Heart left ventricle (tissue), 16 donors: ENCODE measurements at regions of chr22 and their contacts with region 1.

Region 1: GRCh38 chr22:19693981-19694670 is 20.2 kb upstream of the SEPTIN5 start:
- DNase-seq: peak in 1 of 5 donors; percentile 3
- ATAC-seq: no peak
- H3K4me3 ChIP-seq: no peak overlapping the region
- H3K27ac ChIP-seq: no peak overlapping the region
- H3K4me1 ChIP-seq: peaks cover 0 to 16% (median 3%) of the 10 kb centered on the region in 12 donors
- H3K27me3 ChIP-seq: no peaks in the 10 kb centered on the region
- CTCF ChIP-seq: no peak
- POLR2A ChIP-seq: no peak

Region 2: DNA sequence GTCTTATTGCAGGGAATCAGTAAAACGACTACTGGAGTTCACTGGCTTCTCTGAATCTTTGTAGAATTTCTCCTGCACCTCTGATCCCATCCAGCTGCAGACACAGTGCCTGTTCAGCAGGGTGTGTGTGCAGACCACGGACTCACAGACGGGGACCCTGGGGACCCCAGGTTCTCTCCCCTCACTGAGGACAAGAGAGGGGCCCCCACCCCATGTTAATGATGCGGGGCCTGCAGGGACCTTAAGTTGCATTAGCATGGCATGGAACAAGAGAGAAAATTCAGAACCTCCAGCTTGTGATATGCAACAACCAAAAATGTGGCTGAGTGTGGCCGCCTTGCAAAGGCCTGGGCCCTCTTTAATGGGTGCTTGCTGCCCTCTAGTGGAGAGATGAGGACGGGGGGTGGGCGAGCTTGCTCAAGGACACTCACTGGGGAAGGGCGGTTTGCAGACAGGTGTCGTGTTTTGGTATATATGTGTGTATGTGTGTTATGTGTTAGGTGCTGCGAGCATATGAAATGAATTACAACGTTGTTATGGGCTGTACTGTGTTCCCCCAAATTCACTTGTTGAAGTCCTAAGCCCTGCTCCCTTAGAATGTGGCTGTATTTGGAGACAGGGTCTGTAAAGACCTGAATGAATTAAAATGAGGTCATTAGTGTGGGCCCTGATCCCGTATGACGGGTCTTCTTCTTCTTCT is 64.3 kb before region 1 on chr22:
- intact Hi-C with region 1: no loop called
- DNase-seq: peak; percentile 75 to 89 (median 78)
- ATAC-seq: peak; percentile 82 to 93 (median 86)
- H3K4me3 ChIP-seq: no peak overlapping the region
- H3K27ac ChIP-seq: no peak overlapping the region
- H3K4me1 ChIP-seq: peaks cover 0 to 4% (median 0%) of the 10 kb centered on the region in 12 donors
- H3K27me3 ChIP-seq: peaks cover 0 to 8% (median 0%) of the 10 kb centered on the region in 9 donors
- CTCF ChIP-seq: peak; percentile 82 to 99 (median 91)
- POLR2A ChIP-seq: no peak

Region 3: GRCh38 chr22:19710020-19710768 is 16.1 kb after region 1 on chr22:
- intact Hi-C with region 1: loop called in 1 of 10 experiments (anchors 2 kb)
- DNase-seq: peak in 2 of 5 donors; percentile 17 to 23
- ATAC-seq: no peak
- H3K4me3 ChIP-seq: no peak overlapping the region
- H3K27ac ChIP-seq: no peak overlapping the region
- H3K4me1 ChIP-seq: peaks cover 0 to 30% (median 8%) of the 10 kb centered on the region in 12 donors
- H3K27me3 ChIP-seq: peaks cover 0 to 16% (median 2%) of the 10 kb centered on the region in 9 donors
- CTCF ChIP-seq: no peak
- POLR2A ChIP-seq: no peak

Region 4: GRCh38 chr22:19730655-19731360 is 36.7 kb after region 1 on chr22:
- intact Hi-C with region 1: no loop called
- DNase-seq: peak; percentile 82 to 93 (median 84)
- ATAC-seq: peak; percentile 80 to 91 (median 85)
- H3K4me3 ChIP-seq: peak overlapping the region in 10 of 12 donors; percentile 10 to 50 (median 42)
- H3K27ac ChIP-seq: no peak overlapping the region
- H3K4me1 ChIP-seq: peaks cover 0 to 10% (median 8%) of the 10 kb centered on the region in 12 donors
- H3K27me3 ChIP-seq: no peaks in the 10 kb centered on the region
- CTCF ChIP-seq: peak; percentile 87 to 99 (median 94)
- POLR2A ChIP-seq: no peak

Region 5: DNA sequence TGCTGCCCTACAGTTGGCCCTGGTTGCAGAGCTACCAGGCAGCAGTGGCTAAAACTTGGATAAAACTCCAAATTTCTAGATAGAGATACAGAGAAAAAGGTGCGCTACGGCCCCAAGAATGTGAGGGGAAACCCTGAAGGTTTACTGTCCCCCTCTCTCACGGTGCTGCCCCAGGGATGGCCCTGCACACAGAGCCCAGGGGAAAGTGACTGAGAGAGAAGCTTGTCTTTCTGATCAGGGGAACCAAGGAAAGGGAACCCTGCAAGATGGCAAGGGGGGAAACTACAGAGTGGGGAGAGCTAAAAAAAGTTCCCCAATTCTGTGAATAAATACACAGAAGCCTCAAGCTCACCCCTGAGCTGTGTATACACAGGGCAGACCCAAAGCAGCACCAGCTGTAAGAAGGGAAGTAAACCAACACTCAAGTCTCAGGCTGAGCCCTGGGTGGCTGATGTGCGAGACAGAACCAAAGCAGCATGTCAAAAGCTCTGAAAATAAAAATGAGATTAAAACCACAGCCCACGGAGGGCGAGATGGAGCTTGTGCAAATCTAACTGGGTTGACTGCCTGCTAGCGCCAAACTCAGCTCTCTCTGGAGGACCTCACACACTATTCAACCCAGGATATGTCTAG is 138.5 kb after region 1 on chr22:
- intact Hi-C with region 1: no loop called
- DNase-seq: no peak
- ATAC-seq: no peak
- H3K4me3 ChIP-seq: no peak overlapping the region
- H3K27ac ChIP-seq: no peak overlapping the region
- H3K4me1 ChIP-seq: no peaks in the 10 kb centered on the region
- H3K27me3 ChIP-seq: no peaks in the 10 kb centered on the region
- CTCF ChIP-seq: no peak
- POLR2A ChIP-seq: no peak